Tibial artery (tissue), 4 donors: ENCODE measurements at regions of chr16 and their contacts with region 1.

Region 1: DNA sequence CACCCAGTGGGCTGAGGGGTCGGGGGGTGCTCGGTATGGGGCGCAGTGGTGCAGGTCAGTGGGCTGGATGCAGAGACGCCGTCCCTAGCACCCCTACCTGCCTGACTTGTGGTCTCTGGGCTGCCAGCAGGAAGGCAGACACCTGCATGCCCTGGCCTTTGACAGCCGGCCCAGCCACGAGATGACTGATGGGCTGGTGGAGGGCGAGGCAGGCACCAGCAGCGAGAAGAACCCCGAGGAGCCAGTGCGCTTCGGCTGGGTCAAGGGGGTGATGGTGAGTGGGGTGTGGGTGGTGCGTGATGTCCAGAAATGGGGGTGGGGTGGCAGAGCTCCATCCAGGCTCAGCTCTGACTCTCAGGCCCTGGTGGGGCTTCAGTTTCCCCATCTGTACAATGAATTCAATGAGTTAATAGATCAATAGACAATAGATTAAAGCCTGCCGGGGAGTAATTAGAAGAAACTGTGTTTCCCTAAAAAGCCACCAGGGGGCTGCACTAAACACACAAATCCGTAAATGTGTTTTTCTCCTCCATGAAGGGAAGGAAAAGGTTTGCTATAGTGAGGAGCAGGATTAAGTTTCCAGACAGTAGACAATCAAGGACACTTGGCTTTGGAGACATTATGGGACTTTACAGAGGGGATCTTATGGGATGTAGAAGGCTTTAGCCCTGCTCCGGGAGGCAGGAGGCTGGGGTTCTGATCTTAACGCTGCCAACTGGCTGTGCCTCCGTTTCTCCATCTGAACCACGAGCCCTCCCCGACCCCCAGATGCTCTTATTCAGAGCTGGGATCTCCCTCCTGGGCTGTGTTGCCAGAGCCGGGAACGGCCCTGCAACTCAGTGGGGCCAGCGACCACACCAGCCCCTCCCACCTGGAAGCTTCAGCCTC is 2.2 kb downstream of the SLC12A3 start:
- DNase-seq: no peak
- H3K4me3 ChIP-seq: no peak overlapping the region
- H3K27ac ChIP-seq: no peak overlapping the region
- H3K4me1 ChIP-seq: peaks cover 0 to 4% (median 0%) of the 10 kb centered on the region in 4 donors
- H3K27me3 ChIP-seq: no peaks in the 10 kb centered on the region
- CTCF ChIP-seq: peak; percentile 78 to 89

Region 2: DNA sequence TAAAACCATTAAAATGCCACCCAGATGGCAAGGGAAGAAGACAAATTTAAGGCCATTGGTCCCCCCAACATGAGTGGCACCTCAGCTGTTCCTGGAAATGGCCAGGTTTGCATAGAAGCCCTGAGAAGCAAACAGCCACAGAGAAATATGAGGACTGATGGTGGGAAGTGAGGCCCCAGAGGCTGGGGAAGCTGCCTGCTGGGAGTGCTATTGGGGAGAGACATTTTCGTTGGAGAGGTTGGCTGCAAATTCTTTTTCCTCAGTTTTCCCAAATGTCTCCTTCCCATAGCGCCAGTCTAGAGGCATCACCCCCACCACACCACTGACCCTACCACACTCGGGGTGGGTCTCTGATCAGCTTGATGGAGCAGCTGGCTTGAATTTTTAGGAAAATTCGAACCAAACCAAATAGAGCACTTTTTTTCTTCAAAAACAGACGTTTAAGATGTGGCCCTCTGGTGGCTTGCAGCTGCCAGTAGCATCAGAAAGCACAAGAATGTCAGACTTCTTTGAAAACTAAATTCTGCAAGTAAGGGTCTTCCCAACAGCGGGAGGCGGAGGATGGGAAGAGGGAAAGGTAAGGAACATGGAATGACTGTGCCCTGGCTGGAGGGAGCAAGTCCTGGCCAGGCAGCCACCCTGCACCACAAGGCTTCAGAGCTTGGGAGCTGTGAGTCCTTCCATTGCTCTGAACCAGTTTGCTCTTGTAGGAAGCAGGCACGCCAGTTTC is 15.4 kb before region 1 on chr16:
- intact Hi-C with region 1: no loop called
- DNase-seq: no peak
- H3K4me3 ChIP-seq: no peak overlapping the region
- H3K27ac ChIP-seq: no peak overlapping the region
- H3K4me1 ChIP-seq: peaks cover 0 to 16% (median 4%) of the 10 kb centered on the region in 4 donors
- H3K27me3 ChIP-seq: no peaks in the 10 kb centered on the region
- CTCF ChIP-seq: peak in 1 of 2 experiments; percentile 14

Region 3: DNA sequence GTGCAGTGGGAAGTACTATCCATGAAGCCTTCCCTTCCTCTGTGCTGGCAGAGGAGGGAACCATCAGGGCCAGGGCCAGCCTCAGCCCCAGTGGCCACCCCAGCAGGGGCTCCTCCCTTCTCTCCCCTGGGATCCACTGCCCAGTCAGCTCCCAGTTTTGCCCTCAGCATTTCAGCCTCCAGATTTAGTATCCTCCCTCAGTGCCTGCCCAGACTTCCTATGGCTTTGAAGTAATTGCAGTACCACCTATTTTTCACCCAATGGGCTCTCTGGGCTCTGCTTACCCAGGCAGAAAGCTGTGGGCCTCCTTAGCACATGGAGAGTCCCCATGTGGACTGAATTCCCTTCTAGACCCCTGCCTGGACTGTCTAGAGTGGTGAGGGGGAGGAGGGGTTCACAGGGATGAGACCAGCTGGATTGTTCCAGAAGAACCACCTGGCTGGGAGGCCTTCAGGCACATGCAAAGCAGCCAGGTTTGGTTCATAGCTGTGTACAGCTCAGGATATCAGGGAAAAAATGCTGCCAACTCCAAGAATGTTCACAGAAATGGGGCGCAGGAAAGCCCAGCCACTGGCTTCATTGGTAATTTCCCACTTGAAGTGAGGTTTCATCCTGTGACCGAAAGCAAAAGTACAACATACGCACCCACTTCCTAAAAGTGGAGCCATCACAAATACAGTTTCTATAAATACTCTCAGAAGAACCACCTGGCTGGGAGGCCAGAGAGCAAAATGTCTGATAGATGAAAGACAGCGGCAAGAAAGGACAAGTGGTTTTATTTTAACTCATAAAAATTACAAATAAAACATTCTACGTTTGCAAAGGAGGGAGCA is 49.6 kb after region 1 on chr16:
- intact Hi-C with region 1: no loop called
- DNase-seq: peak in 1 of 2 donors; percentile 56
- H3K4me3 ChIP-seq: no peak overlapping the region
- H3K27ac ChIP-seq: no peak overlapping the region
- H3K4me1 ChIP-seq: peaks cover 0 to 28% (median 20%) of the 10 kb centered on the region in 4 donors
- H3K27me3 ChIP-seq: no peaks in the 10 kb centered on the region
- CTCF ChIP-seq: no peak

Region 4: DNA sequence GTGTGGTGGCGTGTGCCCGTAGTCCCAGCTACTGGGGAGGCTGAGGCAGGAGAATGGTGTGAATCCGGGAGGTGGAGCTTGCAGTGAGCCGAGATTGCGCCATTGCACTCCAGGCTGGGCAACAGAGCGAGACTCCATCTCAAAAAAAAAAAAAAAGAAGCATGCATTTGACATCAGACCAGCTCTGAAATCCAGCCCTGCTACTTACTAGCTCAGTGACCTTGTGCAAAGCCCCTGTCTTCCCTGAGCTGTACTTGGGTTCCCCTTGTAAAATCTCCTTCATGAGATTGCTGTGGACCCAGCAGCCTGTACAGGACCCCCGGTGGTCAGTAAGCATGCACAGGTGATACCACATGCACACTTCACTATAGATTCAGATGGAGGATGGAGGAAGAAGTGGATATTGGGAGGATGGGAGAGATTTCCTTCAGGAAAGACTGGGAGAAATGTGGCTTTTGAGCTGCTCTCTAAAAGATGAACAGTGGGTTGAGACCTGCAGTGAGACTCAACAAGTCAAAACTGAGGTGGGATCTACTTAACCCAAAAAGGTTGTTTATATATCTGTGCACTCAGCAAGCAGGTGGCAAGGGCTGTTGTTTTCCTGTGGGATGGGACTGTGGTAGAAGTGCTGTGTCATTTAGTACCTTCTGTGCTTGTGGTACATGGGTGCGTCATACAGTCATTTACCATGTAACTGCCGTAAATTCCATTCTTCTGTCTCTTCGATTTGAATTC is 71.4 kb after region 1 on chr16:
- intact Hi-C with region 1: loop called (anchors 5 kb)
- DNase-seq: peak in 1 of 2 donors; percentile 53
- H3K4me3 ChIP-seq: no peak overlapping the region
- H3K27ac ChIP-seq: no peak overlapping the region
- H3K4me1 ChIP-seq: peaks cover 0 to 42% (median 18%) of the 10 kb centered on the region in 4 donors
- H3K27me3 ChIP-seq: no peaks in the 10 kb centered on the region
- CTCF ChIP-seq: no peak

Region 5: DNA sequence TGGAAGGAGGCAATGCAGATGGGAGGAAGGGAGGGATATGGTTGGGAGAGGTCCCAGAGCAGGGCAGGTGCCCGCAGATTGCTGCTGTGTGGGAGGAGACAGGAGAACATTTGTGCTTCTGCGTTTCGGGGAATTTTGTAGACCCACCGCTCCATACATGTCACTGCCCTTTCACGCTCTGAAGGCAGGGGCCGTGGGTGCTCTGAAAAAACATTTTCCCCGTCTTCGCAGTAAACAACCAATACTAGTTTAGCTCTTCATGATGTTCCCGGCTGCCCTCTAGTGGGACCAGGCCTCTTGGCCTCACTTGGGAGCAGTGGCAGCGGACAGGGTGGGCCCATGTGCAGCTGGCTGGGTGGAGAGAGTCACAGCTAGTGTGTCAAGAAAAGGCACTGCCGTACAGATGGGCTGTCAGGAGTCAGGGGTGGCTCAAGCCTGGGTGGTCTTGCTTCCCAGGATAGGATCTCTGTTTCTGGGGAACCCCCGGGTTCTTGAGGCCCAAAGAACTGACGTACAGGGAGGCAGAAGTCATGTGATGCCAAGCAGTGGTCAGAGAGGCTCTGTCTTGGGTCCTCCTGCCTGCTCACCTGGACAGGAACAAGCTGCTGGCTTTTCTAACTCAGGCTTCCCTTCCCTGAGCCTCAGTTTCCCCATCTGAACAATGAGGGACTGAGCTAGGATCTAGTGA is 178.7 kb after region 1 on chr16:
- intact Hi-C with region 1: loop called (anchors 5 kb)
- DNase-seq: peak; percentile 83 to 84
- H3K4me3 ChIP-seq: peak overlapping the region in 1 of 2 donors; percentile 27
- H3K27ac ChIP-seq: peak overlapping the region; percentile 17 to 53
- H3K4me1 ChIP-seq: peaks cover 0 to 8% (median 6%) of the 10 kb centered on the region in 4 donors
- H3K27me3 ChIP-seq: no peaks in the 10 kb centered on the region
- CTCF ChIP-seq: peak; percentile 70 to 74

Region 6: GRCh38 chr16:57300387-57301125 is 433.4 kb after region 1 on chr16:
- intact Hi-C with region 1: no loop called
- DNase-seq: peak; percentile 100
- H3K4me3 ChIP-seq: peak overlapping the region; percentile 50 to 55
- H3K27ac ChIP-seq: peak overlapping the region; percentile 89
- H3K4me1 ChIP-seq: peaks cover 0 to 40% (median 26%) of the 10 kb centered on the region in 4 donors
- H3K27me3 ChIP-seq: no peaks in the 10 kb centered on the region
- CTCF ChIP-seq: peak; percentile 99 to 100